CD8-positive, alpha-beta T cell (primary cell): ENCODE measurements at regions of chr7 and their contacts with region 1.

Region 1: GRCh38 chr7:149624419-149625339 is 127.1 kb upstream of the ZNF746 start:
- DNase-seq: peak; percentile 84 to 96 (median 90)
- ATAC-seq: peak; percentile 84
- H3K4me3 ChIP-seq: peak overlapping the region; percentile 68 to 86
- H3K4me3 Mint-ChIP-seq: peak overlapping the region; percentile 93
- H3K27ac ChIP-seq: peak overlapping the region; percentile 46 to 68
- H3K27ac Mint-ChIP-seq: peak overlapping the region; percentile 93
- H3K4me1 ChIP-seq: peaks cover 27% of the 10 kb centered on the region
- H3K4me1 Mint-ChIP-seq: peaks cover 41% of the 10 kb centered on the region
- H3K27me3 ChIP-seq: no peaks in the 10 kb centered on the region
- H3K27me3 Mint-ChIP-seq: peaks cover 3% of the 10 kb centered on the region
- CTCF ChIP-seq: peak; percentile 99

Region 2: DNA sequence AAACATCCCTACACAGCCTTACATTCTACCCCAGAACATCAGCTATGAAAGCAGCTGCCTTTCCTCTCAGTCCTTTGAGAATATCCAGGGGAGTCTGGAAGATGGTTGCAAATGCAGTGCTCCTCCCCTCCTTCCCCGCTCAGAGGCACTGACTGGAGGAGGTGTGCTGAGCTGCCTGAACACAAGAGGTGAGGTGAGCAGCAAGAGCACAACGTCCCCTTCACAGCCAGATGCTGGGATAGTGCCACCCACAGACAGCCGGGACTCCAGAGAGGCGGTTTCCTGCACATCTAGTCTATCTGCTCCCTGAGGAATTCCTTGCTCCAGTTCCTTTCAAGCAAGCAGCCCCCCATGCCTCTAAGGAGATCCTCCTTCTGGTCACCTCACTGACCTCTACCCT is 814.8 kb before region 1 on chr7:
- CTCF ChIA-PET with region 1: no interaction called
- POLR2A ChIA-PET with region 1: no interaction called
- intact Hi-C with region 1: no loop called
- DNase-seq: no peak
- ATAC-seq: no peak
- H3K4me3 ChIP-seq: no peak overlapping the region
- H3K4me3 Mint-ChIP-seq: no peak overlapping the region
- H3K27ac ChIP-seq: no peak overlapping the region
- H3K27ac Mint-ChIP-seq: peak overlapping the region; percentile 30
- H3K4me1 ChIP-seq: no peaks in the 10 kb centered on the region
- H3K4me1 Mint-ChIP-seq: peaks cover 5% of the 10 kb centered on the region
- H3K27me3 ChIP-seq: no peaks in the 10 kb centered on the region
- H3K27me3 Mint-ChIP-seq: no peaks in the 10 kb centered on the region
- CTCF ChIP-seq: no peak

Region 3: GRCh38 chr7:149239345-149240191 is 385.1 kb before region 1 on chr7 and contains the start of gene ZNF212:
- CTCF ChIA-PET with region 1: no interaction called
- POLR2A ChIA-PET with region 1: no interaction called
- intact Hi-C with region 1: loop called in 1 of 2 experiments (anchors 1 kb)
- DNase-seq: peak; percentile 76 to 92 (median 89)
- ATAC-seq: peak; percentile 100
- H3K4me3 ChIP-seq: peak within 1 kb of the TSS; percentile 81 to 95
- H3K4me3 Mint-ChIP-seq: peak within 1 kb of the TSS; percentile 92
- H3K27ac ChIP-seq: peak within 1 kb of the TSS; percentile 41 to 67
- H3K27ac Mint-ChIP-seq: peak within 1 kb of the TSS; percentile 91
- H3K4me1 ChIP-seq: peaks cover 23% of the 10 kb centered on the region
- H3K4me1 Mint-ChIP-seq: peaks cover 34% of the 10 kb centered on the region
- H3K27me3 ChIP-seq: peaks cover 0 to 4% of the 10 kb centered on the region in 2 experiments
- H3K27me3 Mint-ChIP-seq: peaks cover 7% of the 10 kb centered on the region
- CTCF ChIP-seq: peak; percentile 85
- total RNA-seq, gene ZNF212: 20.9 to 22.1 TPM

Region 4: GRCh38 chr7:149284850-149285626 is 339.6 kb before region 1 on chr7:
- CTCF ChIA-PET with region 1: interaction called, 3 read pairs
- POLR2A ChIA-PET with region 1: no interaction called
- intact Hi-C with region 1: loop called in 1 of 2 experiments (anchors 2 kb)
- DNase-seq: peak; percentile 96 to 99 (median 98)
- ATAC-seq: peak; percentile 96
- H3K4me3 ChIP-seq: peak overlapping the region; percentile 45 to 65
- H3K4me3 Mint-ChIP-seq: peak overlapping the region; percentile 84
- H3K27ac ChIP-seq: peak overlapping the region; percentile 36 to 42
- H3K27ac Mint-ChIP-seq: peak overlapping the region; percentile 91
- H3K4me1 ChIP-seq: peaks cover 39% of the 10 kb centered on the region
- H3K4me1 Mint-ChIP-seq: peaks cover 42% of the 10 kb centered on the region
- H3K27me3 ChIP-seq: no peaks in the 10 kb centered on the region
- H3K27me3 Mint-ChIP-seq: no peaks in the 10 kb centered on the region
- CTCF ChIP-seq: no peak

Region 5: DNA sequence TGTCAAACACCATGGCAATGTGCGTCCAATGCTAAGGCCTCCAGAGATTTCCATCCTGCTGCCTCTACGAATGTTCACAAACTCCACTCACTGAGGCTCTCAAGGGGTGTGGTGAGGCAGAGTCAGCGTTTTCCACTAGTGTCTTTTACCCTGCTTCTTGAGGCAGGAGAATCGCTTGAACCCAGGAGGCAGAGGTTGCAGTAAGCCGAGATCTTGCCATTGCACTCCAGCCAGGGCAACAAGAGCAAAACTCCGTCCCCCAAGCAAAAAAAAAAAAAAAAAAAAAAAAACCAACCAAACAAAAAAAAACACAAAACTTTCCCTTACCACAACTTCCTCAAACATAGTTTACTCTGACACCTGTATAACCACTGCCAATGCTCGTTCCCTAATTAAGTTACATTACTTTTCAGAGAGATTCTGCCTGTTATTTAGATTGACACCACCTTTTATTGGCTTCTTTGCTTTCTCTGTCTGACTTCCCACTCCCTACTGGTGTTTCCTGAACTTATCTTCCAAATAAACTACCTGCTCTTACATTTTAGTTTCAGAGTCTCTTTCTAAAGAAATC is 25.0 kb before region 1 on chr7:
- CTCF ChIA-PET with region 1: interaction called, 5 read pairs
- POLR2A ChIA-PET with region 1: interaction called, 3 read pairs
- intact Hi-C with region 1: loop called in 1 of 2 experiments (anchors 2 kb)
- DNase-seq: peak in 2 of 9 experiments; percentile 28 to 58
- ATAC-seq: peak; percentile 30
- H3K4me3 ChIP-seq: no peak overlapping the region
- H3K4me3 Mint-ChIP-seq: peak overlapping the region; percentile 59
- H3K27ac ChIP-seq: peak overlapping the region; percentile 34 to 56
- H3K27ac Mint-ChIP-seq: peak overlapping the region; percentile 69
- H3K4me1 ChIP-seq: peaks cover 22% of the 10 kb centered on the region
- H3K4me1 Mint-ChIP-seq: peaks cover 36% of the 10 kb centered on the region
- H3K27me3 ChIP-seq: no peaks in the 10 kb centered on the region
- H3K27me3 Mint-ChIP-seq: no peaks in the 10 kb centered on the region
- CTCF ChIP-seq: no peak

Region 6: GRCh38 chr7:149771721-149772240 is 147.1 kb after region 1 on chr7:
- CTCF ChIA-PET with region 1: interaction called, 3 read pairs
- POLR2A ChIA-PET with region 1: no interaction called
- intact Hi-C with region 1: loop called in 1 of 2 experiments (anchors 1 kb)
- DNase-seq: peak; percentile 70 to 91 (median 84)
- ATAC-seq: peak; percentile 88
- H3K4me3 ChIP-seq: peak overlapping the region; percentile 63 to 66
- H3K4me3 Mint-ChIP-seq: peak overlapping the region; percentile 71
- H3K27ac ChIP-seq: no peak overlapping the region
- H3K27ac Mint-ChIP-seq: no peak overlapping the region
- H3K4me1 ChIP-seq: peaks cover 12% of the 10 kb centered on the region
- H3K4me1 Mint-ChIP-seq: peaks cover 6% of the 10 kb centered on the region
- H3K27me3 ChIP-seq: no peaks in the 10 kb centered on the region
- H3K27me3 Mint-ChIP-seq: no peaks in the 10 kb centered on the region
- CTCF ChIP-seq: no peak